ENCODE measurements at regions of chr2 and their contacts with region 1.

Region 1: DNA sequence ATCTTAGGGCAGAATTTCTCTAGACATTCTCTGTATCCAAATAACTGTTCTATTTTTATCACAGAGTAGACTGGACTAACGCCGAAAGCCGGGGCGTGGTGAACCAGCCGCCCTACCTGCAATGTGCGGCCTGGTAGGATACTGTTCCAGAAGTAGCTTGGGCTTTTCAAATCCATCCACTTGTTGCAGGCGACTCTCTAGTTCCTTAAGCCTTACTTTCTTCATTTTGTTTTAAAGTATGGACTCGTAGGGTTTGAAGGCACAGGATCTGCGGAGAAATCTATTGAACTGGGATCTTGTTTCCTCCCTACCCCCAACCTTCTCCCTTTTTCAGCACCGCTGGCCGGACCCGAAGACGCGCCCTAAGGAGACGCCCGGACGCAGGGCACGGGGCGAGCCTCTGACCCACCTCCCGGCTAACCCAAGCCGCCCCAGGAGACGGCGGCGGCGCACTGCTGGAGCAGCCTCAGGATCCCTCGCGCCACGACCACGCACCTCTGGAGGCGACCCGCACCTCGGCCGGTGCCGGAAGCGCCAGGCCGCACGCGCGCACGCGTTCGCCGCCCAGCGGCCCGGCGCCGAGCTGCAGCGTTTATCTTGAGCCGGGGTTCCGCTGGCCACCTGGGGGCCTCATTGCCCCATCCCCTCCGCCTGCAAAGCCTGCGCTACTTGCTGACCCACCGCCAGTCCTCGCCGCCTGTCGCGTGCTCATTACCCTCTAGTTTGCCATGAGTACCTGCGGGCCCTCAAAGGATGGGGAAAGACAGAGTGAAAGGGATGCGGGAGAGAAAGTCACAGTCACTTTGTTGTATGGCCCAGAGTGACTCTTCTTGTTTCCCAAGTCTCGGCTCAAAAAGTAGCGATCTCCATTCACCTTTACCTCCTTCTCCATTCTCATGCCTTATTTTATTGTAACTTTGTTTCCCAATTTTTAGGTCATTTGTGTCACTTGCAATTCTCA is at the start of gene METTL5:
- DNase-seq: peak; percentile 95
- H3K4me3 Mint-ChIP-seq: peak within 1 kb of the TSS; percentile 95
- H3K27ac Mint-ChIP-seq: peak within 1 kb of the TSS; percentile 88
- H3K4me1 Mint-ChIP-seq: peaks cover 44% of the 10 kb centered on the region
- H3K27me3 Mint-ChIP-seq: no peaks in the 10 kb centered on the region
- total RNA-seq, gene METTL5: 99.7 and 102 TPM in 2 replicates

Region 2: GRCh38 chr2:169798718-169799592 is 25.7 kb before region 1 on chr2 and contains the start of gene SSB:
- intact Hi-C with region 1: loop called (anchors 1 kb)
- DNase-seq: peak; percentile 97
- H3K4me3 Mint-ChIP-seq: peak within 1 kb of the TSS; percentile 96
- H3K27ac Mint-ChIP-seq: peak within 1 kb of the TSS; percentile 96
- H3K4me1 Mint-ChIP-seq: peaks cover 20% of the 10 kb centered on the region
- H3K27me3 Mint-ChIP-seq: peaks cover 8% of the 10 kb centered on the region
- total RNA-seq, gene SSB: 113 TPM in 2 replicates

Region 3: GRCh38 chr2:169877398-169877797 is 52.7 kb after region 1 on chr2:
- intact Hi-C with region 1: loop called (anchors 1 kb)
- DNase-seq: no peak
- H3K4me3 Mint-ChIP-seq: no peak overlapping the region
- H3K27ac Mint-ChIP-seq: no peak overlapping the region
- H3K4me1 Mint-ChIP-seq: no peaks in the 10 kb centered on the region
- H3K27me3 Mint-ChIP-seq: no peaks in the 10 kb centered on the region

Region 4: GRCh38 chr2:169928463-169928864 is 103.8 kb after region 1 on chr2:
- intact Hi-C with region 1: loop called (anchors 1 kb)
- DNase-seq: no peak
- H3K4me3 Mint-ChIP-seq: no peak overlapping the region
- H3K27ac Mint-ChIP-seq: no peak overlapping the region
- H3K4me1 Mint-ChIP-seq: no peaks in the 10 kb centered on the region
- H3K27me3 Mint-ChIP-seq: no peaks in the 10 kb centered on the region

Measured in activated CD4-positive, alpha-beta T cell treated with anti-CD3 and anti-CD28 coated beads, Interleukin-2, amount 10 ng/mL, durations not matched to agents 24 days and 14 days (primary cell).